A549 (cell line): ENCODE measurements at regions of chr2 and their contacts with region 1.

Region 1: GRCh38 chr2:120934574-120935340 is 199.1 kb downstream of the GLI2 start:
- DNase-seq: peak; percentile 97 to 99
- ATAC-seq: peak; percentile 67 to 77
- H3K4me3 ChIP-seq: peak overlapping the region; percentile 21
- H3K27ac ChIP-seq: peak overlapping the region; percentile 97 to 98
- H3K4me1 ChIP-seq: peaks cover 77% of the 10 kb centered on the region
- CTCF ChIP-seq: no peak
- EP300 ChIP-seq: peak; percentile 98
- POLR2A ChIP-seq: no peak
- RAD21 ChIP-seq: peak in 1 of 2 experiments; percentile 51; a peak in 3 of 5 replicates

Region 2: GRCh38 chr2:120914839-120915521 is 19.8 kb before region 1 on chr2:
- CTCF ChIA-PET with region 1: interaction called, 5 read pairs
- POLR2A ChIA-PET with region 1: interaction called, 92 read pairs
- DNase-seq: peak; percentile 51 to 90
- ATAC-seq: peak; percentile 30 to 46
- H3K4me3 ChIP-seq: no peak overlapping the region
- H3K27ac ChIP-seq: peak overlapping the region; percentile 95 to 98
- H3K4me1 ChIP-seq: peaks cover 83% of the 10 kb centered on the region
- CTCF ChIP-seq: no peak
- EP300 ChIP-seq: peak; percentile 83 to 96; a peak in 4 of 5 replicates
- POLR2A ChIP-seq: 0 out of 2 replicates have a peak, but pooled peaks have one; percentile 18
- RAD21 ChIP-seq: peak; percentile 7 to 49